ENCODE measurements at regions of chr2 and their contacts with region 1.

Region 1: DNA sequence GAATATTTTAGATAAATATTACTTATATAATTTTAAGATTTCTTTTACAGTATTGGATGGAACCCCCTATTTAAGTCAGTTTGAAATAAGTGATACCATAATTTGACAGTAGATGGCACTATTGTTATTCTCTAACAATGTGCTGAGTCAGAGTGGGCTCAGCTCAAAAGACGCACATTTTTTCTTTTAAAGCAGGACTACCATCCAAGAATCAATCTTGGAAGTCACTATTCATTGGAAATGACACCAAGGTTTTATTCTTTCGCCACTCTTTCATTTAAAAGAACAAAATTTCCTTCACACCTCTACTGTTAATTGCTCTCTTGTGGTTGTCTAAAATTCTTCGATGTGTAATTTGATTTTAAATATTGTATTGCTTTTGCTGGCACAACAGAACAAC is 32.6 kb upstream of the SPAG16 start:
- DNase-seq: peak in 3 of 14 experiments; percentile 55 to 72 (median 68)
- ATAC-seq: peak; percentile 61
- H3K4me3 ChIP-seq: no peak overlapping the region
- H3K4me3 Mint-ChIP-seq: no peak overlapping the region
- H3K27ac ChIP-seq: no peak overlapping the region
- H3K27ac Mint-ChIP-seq: no peak overlapping the region
- H3K4me1 ChIP-seq: no peaks in the 10 kb centered on the region
- H3K4me1 Mint-ChIP-seq: peaks cover 7% of the 10 kb centered on the region
- H3K27me3 ChIP-seq: no peaks in the 10 kb centered on the region
- H3K27me3 Mint-ChIP-seq: peaks cover 9% of the 10 kb centered on the region
- CTCF ChIP-seq: peak; percentile 82

Region 2: GRCh38 chr2:212686285-212686895 is 565.2 kb before region 1 on chr2:
- CTCF ChIA-PET with region 1: no interaction called
- POLR2A ChIA-PET with region 1: no interaction called
- intact Hi-C with region 1: loop called in 1 of 2 experiments (anchors 1 kb)
- DNase-seq: peak; percentile 5 to 74 (median 30)
- ATAC-seq: peak; percentile 48
- H3K4me3 ChIP-seq: no peak overlapping the region
- H3K4me3 Mint-ChIP-seq: no peak overlapping the region
- H3K27ac ChIP-seq: no peak overlapping the region
- H3K27ac Mint-ChIP-seq: no peak overlapping the region
- H3K4me1 ChIP-seq: no peaks in the 10 kb centered on the region
- H3K4me1 Mint-ChIP-seq: peaks cover 4% of the 10 kb centered on the region
- H3K27me3 ChIP-seq: no peaks in the 10 kb centered on the region
- H3K27me3 Mint-ChIP-seq: peaks cover under 1% of the 10 kb centered on the region
- CTCF ChIP-seq: peak; percentile 85

Region 3: DNA sequence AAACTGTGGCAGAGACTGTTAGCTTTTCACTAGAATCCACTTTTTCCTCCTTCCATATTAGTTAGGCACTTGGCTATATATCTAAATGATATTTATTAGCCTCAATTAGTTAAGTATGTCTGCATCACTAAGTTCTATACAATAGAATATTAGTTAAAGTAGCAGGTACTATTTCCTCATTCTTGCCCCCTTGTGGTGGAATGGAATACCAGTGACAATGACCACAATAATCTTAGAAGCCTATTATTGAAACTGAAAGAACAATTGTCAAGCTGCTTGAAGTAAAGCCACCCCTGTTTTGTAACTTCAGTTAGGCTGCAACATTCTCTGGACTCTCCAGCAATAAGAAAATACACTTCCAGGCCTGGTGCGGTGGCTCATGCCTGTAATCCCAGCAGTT is 682.9 kb after region 1 on chr2:
- CTCF ChIA-PET with region 1: no interaction called
- POLR2A ChIA-PET with region 1: no interaction called
- intact Hi-C with region 1: loop called (anchors 1 to 2 kb)
- DNase-seq: peak in 3 of 14 experiments; percentile 29 to 41 (median 33)
- ATAC-seq: no peak
- H3K4me3 ChIP-seq: no peak overlapping the region
- H3K4me3 Mint-ChIP-seq: no peak overlapping the region
- H3K27ac ChIP-seq: no peak overlapping the region
- H3K27ac Mint-ChIP-seq: no peak overlapping the region
- H3K4me1 ChIP-seq: no peaks in the 10 kb centered on the region
- H3K4me1 Mint-ChIP-seq: no peaks in the 10 kb centered on the region
- H3K27me3 ChIP-seq: no peaks in the 10 kb centered on the region
- H3K27me3 Mint-ChIP-seq: peaks cover 7% of the 10 kb centered on the region
- CTCF ChIP-seq: peak; percentile 36

Region 4: GRCh38 chr2:215002500-215002899 is 1750.9 kb after region 1 on chr2:
- CTCF ChIA-PET with region 1: no interaction called
- POLR2A ChIA-PET with region 1: no interaction called
- intact Hi-C with region 1: loop called in 1 of 2 experiments (anchors 10 kb)
- DNase-seq: peak in 3 of 14 experiments; percentile 5 to 6 (median 5)
- ATAC-seq: no peak
- H3K4me3 ChIP-seq: no peak overlapping the region
- H3K4me3 Mint-ChIP-seq: no peak overlapping the region
- H3K27ac ChIP-seq: no peak overlapping the region
- H3K27ac Mint-ChIP-seq: no peak overlapping the region
- H3K4me1 ChIP-seq: no peaks in the 10 kb centered on the region
- H3K4me1 Mint-ChIP-seq: no peaks in the 10 kb centered on the region
- H3K27me3 ChIP-seq: no peaks in the 10 kb centered on the region
- H3K27me3 Mint-ChIP-seq: no peaks in the 10 kb centered on the region
- CTCF ChIP-seq: no peak

Measured in CD4-positive, alpha-beta T cell (primary cell).